Esophagus squamous epithelium (tissue), 5 donors: ENCODE measurements at regions of chr9 and their contacts with region 1.

Region 1: GRCh38 chr9:6305954-6306563 is 22.1 kb upstream of the TPD52L3 start:
- DNase-seq: no peak
- H3K4me3 ChIP-seq: no peak overlapping the region
- H3K27ac ChIP-seq: no peak overlapping the region
- H3K4me1 ChIP-seq: peaks cover 4 to 25% (median 4%) of the 10 kb centered on the region in 3 donors
- H3K27me3 ChIP-seq: peaks cover 0 to 9% (median 0%) of the 10 kb centered on the region in 4 donors
- CTCF ChIP-seq: peak in 5 of 6 experiments; percentile 53 to 80 (median 64)
- POLR2A ChIP-seq: no peak

Region 2: GRCh38 chr9:5886114-5886939 is 419.7 kb before region 1 on chr9:
- intact Hi-C with region 1: loop called (anchors 10 kb)
- DNase-seq: no peak
- H3K4me3 ChIP-seq: no peak overlapping the region
- H3K27ac ChIP-seq: no peak overlapping the region
- H3K4me1 ChIP-seq: peaks cover 0 to 29% (median 6%) of the 10 kb centered on the region in 3 donors
- H3K27me3 ChIP-seq: no peaks in the 10 kb centered on the region
- CTCF ChIP-seq: peak; percentile 51 to 89 (median 78)
- POLR2A ChIP-seq: no peak

Region 3: GRCh38 chr9:5988265-5988664 is 317.8 kb before region 1 on chr9:
- intact Hi-C with region 1: no loop called
- DNase-seq: no peak
- H3K4me3 ChIP-seq: no peak overlapping the region
- H3K27ac ChIP-seq: no peak overlapping the region
- H3K4me1 ChIP-seq: peaks cover 0 to 2% (median 0%) of the 10 kb centered on the region in 3 donors
- H3K27me3 ChIP-seq: no peaks in the 10 kb centered on the region
- CTCF ChIP-seq: no peak
- POLR2A ChIP-seq: no peak

Region 4: DNA sequence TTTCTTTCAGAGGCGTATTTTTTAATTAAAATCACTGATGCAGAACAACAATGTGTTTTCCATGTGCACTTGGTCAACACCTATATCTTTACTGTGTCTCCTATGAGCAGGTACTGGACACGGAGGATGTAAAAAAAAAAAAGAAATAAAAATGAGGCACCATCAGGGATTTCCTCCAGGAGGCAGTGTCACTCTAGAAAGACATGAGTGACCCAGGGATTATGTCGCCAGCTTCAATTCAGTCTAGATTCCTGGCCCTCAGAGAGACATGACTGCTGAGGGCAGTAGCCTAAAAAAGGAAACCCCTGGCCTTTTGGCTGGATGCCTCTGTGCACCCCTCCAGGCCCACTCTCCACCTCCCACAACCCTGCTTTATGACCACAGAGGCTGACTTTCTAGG is 108.7 kb before region 1 on chr9:
- intact Hi-C with region 1: loop called (anchors 5 kb)
- DNase-seq: no peak
- H3K4me3 ChIP-seq: no peak overlapping the region
- H3K27ac ChIP-seq: peak overlapping the region in 1 of 4 donors; percentile 0
- H3K4me1 ChIP-seq: peaks cover 0 to 13% (median 0%) of the 10 kb centered on the region in 3 donors
- H3K27me3 ChIP-seq: no peaks in the 10 kb centered on the region
- CTCF ChIP-seq: peak in 5 of 6 experiments; percentile 21 to 48 (median 37)
- POLR2A ChIP-seq: no peak